B cell (primary cell): ENCODE measurements at regions of chr19 and their contacts with region 1.

Region 1: DNA sequence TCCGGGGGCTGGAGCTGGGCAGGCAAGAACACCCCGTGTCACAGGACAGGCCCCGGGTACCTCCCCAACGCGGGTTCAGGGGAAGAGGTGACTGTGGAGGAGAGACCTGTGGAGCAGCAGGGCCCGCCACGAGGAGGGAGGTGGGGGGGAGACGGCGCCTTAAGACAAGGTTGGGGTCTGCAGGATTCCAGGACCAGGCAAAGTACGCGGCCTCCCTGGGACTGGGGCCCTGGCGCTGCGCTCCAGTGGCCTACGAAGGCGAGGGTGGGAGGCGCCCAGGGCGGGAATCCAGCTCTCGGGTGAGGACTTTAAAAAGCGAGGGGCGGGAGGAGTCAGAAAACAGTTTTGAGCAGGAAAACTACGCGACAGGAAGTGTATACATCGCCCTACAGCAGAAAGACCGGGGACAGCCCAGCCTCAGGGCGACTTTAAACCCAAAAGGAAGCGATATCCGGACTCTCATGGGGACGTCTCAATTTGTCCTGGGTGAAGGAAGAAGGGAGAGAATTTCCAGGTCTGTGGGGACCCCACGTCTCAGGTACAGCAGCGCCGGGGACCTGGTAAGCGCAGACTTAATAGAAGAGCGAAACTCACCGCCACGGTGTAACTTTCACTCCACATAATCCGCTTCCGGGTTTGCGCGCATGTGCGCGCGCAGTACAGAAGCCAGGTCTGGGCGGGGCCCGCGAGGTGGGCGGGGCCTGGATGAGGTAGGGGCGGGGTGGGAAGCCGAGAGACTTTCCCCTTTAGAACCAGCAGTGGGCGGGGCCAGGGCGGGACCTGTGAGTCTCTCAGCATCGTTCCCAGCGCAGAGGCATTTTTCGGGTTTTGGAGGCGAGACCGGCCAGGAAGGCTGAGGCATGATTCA is at the start of gene ZNF83:
- DNase-seq: peak; percentile 97
- ATAC-seq: peak; percentile 96
- H3K4me3 ChIP-seq: peak within 1 kb of the TSS; percentile 72 to 95 (median 89)
- H3K4me3 Mint-ChIP-seq: peak within 1 kb of the TSS; percentile 94
- H3K27ac ChIP-seq: peak within 1 kb of the TSS; percentile 81 to 91
- H3K27ac Mint-ChIP-seq: peak within 1 kb of the TSS; percentile 95
- H3K4me1 ChIP-seq: peaks cover 9 to 18% of the 10 kb centered on the region in 2 donors
- H3K4me1 Mint-ChIP-seq: peaks cover 17% of the 10 kb centered on the region
- H3K27me3 ChIP-seq: no peaks in the 10 kb centered on the region
- H3K27me3 Mint-ChIP-seq: no peaks in the 10 kb centered on the region
- CTCF ChIP-seq: no peak
- total RNA-seq, gene ZNF83: 92.3 and 93.3 TPM in 2 replicates

Region 2: GRCh38 chr19:51904331-51905165 is 733.4 kb before region 1 on chr19 and contains the start of gene ZNF649:
- CTCF ChIA-PET with region 1: no interaction called
- POLR2A ChIA-PET with region 1: no interaction called
- intact Hi-C with region 1: loop called (anchors 2 kb)
- DNase-seq: peak; percentile 90
- ATAC-seq: peak; percentile 95
- H3K4me3 ChIP-seq: peak within 1 kb of the TSS; percentile 66 to 97 (median 91)
- H3K4me3 Mint-ChIP-seq: peak within 1 kb of the TSS; percentile 99
- H3K27ac ChIP-seq: peak within 1 kb of the TSS; percentile 81 to 83
- H3K27ac Mint-ChIP-seq: peak within 1 kb of the TSS; percentile 98
- H3K4me1 ChIP-seq: peaks cover 6 to 15% of the 10 kb centered on the region in 2 donors
- H3K4me1 Mint-ChIP-seq: peaks cover 21% of the 10 kb centered on the region
- H3K27me3 ChIP-seq: peaks cover 0 to 19% (median 3%) of the 10 kb centered on the region in 4 experiments
- H3K27me3 Mint-ChIP-seq: peaks cover 24% of the 10 kb centered on the region
- CTCF ChIP-seq: no peak
- total RNA-seq, gene ZNF649: 35.7 and 36.3 TPM in 2 replicates

Region 3: GRCh38 chr19:52296773-52297600 is 341.0 kb before region 1 on chr19 and contains the start of gene ZNF480:
- CTCF ChIA-PET with region 1: no interaction called
- POLR2A ChIA-PET with region 1: no interaction called
- intact Hi-C with region 1: loop called (anchors 2 kb)
- DNase-seq: peak; percentile 91
- ATAC-seq: peak; percentile 77
- H3K4me3 ChIP-seq: peak within 1 kb of the TSS; percentile 93 to 98 (median 98)
- H3K4me3 Mint-ChIP-seq: peak within 1 kb of the TSS; percentile 96
- H3K27ac ChIP-seq: peak within 1 kb of the TSS; percentile 94 to 96
- H3K27ac Mint-ChIP-seq: peak within 1 kb of the TSS; percentile 98
- H3K4me1 ChIP-seq: peaks cover 11 to 16% of the 10 kb centered on the region in 2 donors
- H3K4me1 Mint-ChIP-seq: peaks cover 21% of the 10 kb centered on the region
- H3K27me3 ChIP-seq: no peaks in the 10 kb centered on the region
- H3K27me3 Mint-ChIP-seq: no peaks in the 10 kb centered on the region
- CTCF ChIP-seq: no peak
- total RNA-seq, gene ZNF480: 21.8 and 24.8 TPM in 2 replicates

Region 4: GRCh38 chr19:52535771-52536447 is 102.0 kb before region 1 on chr19:
- CTCF ChIA-PET with region 1: no interaction called
- POLR2A ChIA-PET with region 1: no interaction called
- intact Hi-C with region 1: loop called (anchors 1 kb)
- DNase-seq: peak; percentile 90
- ATAC-seq: peak; percentile 99
- H3K4me3 ChIP-seq: peak overlapping the region; percentile 71 to 86 (median 76)
- H3K4me3 Mint-ChIP-seq: peak overlapping the region; percentile 95
- H3K27ac ChIP-seq: peak overlapping the region; percentile 45 to 77
- H3K27ac Mint-ChIP-seq: peak overlapping the region; percentile 90
- H3K4me1 ChIP-seq: peaks cover 2 to 18% of the 10 kb centered on the region in 2 donors
- H3K4me1 Mint-ChIP-seq: peaks cover 31% of the 10 kb centered on the region
- H3K27me3 ChIP-seq: no peaks in the 10 kb centered on the region
- H3K27me3 Mint-ChIP-seq: no peaks in the 10 kb centered on the region
- CTCF ChIP-seq: peak; percentile 29

Region 5: DNA sequence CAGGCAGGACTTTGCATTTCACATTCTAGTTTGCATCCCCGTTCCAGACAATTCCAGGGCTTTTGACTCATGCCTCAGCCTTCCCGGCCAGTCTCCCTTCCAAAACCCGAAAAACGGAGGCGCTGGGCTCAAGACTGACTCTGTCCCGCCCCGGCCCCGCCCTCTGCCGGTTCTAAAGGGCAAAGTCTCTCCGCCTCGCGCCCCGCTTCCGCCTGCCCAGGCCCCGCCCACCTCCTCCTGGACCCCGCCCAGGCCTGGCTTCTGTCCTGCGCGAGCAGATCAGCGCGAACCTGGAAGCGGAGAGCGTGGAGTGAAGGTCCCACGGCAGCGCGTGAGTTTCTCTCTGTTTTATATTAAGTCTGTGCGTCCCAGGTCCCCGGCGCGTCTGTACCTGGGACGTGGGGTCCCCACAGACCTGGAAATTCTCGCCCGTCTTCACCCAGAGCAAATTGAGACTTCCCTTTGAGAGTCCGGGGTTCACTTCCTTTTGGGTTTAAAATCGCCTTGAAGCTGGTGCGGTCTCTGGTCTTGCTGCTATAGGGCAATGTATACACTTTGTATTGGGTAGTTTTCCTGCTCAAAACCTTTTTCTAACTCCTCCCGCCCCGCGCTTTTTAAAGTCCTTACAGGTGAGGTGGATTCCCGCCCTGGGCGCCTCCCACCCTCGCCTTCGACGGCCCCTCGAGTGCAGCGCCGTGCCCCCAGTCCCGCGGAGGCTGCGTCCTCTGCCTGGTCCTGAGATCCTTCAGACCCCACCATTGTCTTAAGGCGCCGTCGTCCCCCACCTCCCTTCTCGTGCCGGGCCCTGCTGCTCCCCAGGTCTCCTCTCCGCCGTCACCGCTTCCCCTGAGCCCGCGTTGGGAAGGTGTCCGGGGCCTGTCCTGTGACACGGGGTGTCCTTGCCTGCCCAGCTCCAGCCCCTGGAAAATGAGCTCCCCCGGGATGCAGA is 36.7 kb before region 1 on chr19:
- CTCF ChIA-PET with region 1: no interaction called
- POLR2A ChIA-PET with region 1: no interaction called
- intact Hi-C with region 1: loop called (anchors 1 kb)
- DNase-seq: peak; percentile 92
- ATAC-seq: peak; percentile 99
- H3K4me3 ChIP-seq: peak overlapping the region; percentile 59 to 89 (median 82)
- H3K4me3 Mint-ChIP-seq: peak overlapping the region; percentile 90
- H3K27ac ChIP-seq: peak overlapping the region; percentile 43 to 62
- H3K27ac Mint-ChIP-seq: peak overlapping the region; percentile 87
- H3K4me1 ChIP-seq: peaks cover 11 to 16% of the 10 kb centered on the region in 2 donors
- H3K4me1 Mint-ChIP-seq: peaks cover 25% of the 10 kb centered on the region
- H3K27me3 ChIP-seq: no peaks in the 10 kb centered on the region
- H3K27me3 Mint-ChIP-seq: no peaks in the 10 kb centered on the region
- CTCF ChIP-seq: peak; percentile 61

Region 6: GRCh38 chr19:52734893-52735661 is 97.1 kb after region 1 on chr19 and contains the start of gene ZNF611:
- CTCF ChIA-PET with region 1: no interaction called
- POLR2A ChIA-PET with region 1: no interaction called
- intact Hi-C with region 1: loop called (anchors 1 kb)
- DNase-seq: peak; percentile 98
- ATAC-seq: peak; percentile 98
- H3K4me3 ChIP-seq: peak within 1 kb of the TSS; percentile 67 to 96 (median 90)
- H3K4me3 Mint-ChIP-seq: peak within 1 kb of the TSS; percentile 93
- H3K27ac ChIP-seq: peak within 1 kb of the TSS; percentile 74 to 91
- H3K27ac Mint-ChIP-seq: peak within 1 kb of the TSS; percentile 92
- H3K4me1 ChIP-seq: peaks cover 10 to 19% of the 10 kb centered on the region in 2 donors
- H3K4me1 Mint-ChIP-seq: peaks cover 23% of the 10 kb centered on the region
- H3K27me3 ChIP-seq: no peaks in the 10 kb centered on the region
- H3K27me3 Mint-ChIP-seq: no peaks in the 10 kb centered on the region
- CTCF ChIP-seq: peak; percentile 79
- total RNA-seq, gene ZNF611: 51.5 and 57.9 TPM in 2 replicates

Region 7: DNA sequence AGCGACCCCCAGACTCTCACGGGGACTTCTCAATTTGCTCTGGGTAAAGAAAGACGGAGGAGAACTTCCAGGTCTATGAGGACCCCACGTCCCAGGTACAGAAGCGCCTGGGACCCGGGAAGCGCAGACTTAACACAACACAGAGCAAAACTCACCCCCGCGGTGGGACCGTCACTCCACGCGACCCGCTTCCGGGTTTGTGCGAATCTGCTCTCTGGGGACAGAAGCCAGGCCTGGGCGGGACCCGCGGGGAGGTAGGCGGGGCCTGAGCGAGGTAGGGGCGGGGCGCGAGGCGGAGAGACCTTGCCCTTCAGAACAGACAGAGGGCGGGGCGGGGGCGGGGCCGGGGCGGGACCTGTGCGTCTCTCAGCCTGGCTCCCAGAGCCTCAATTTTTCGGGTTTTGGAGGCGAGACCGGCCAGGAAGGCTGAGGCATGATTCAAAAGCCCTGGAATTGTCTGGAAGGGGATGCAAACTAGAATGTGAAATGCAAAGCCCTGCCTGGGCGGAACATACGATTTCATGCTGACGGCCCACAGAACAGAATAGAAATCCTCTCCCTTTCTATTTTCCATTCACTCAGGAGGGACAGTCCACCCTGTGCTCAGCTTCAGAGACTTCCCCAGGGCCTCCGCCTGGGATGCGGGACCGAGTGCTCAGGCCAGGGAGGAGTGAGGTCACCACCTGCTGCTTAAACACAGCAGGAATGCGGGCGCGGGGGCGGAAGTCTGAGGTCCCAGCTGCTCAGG is 304.6 kb after region 1 on chr19:
- CTCF ChIA-PET with region 1: no interaction called
- POLR2A ChIA-PET with region 1: no interaction called
- intact Hi-C with region 1: loop called (anchors 1 kb)
- DNase-seq: peak; percentile 96
- ATAC-seq: peak; percentile 100
- H3K4me3 ChIP-seq: peak overlapping the region; percentile 64 to 97 (median 88)
- H3K4me3 Mint-ChIP-seq: peak overlapping the region; percentile 92
- H3K27ac ChIP-seq: peak overlapping the region; percentile 72 to 90
- H3K27ac Mint-ChIP-seq: peak overlapping the region; percentile 86
- H3K4me1 ChIP-seq: peaks cover 6 to 20% of the 10 kb centered on the region in 2 donors
- H3K4me1 Mint-ChIP-seq: peaks cover 30% of the 10 kb centered on the region
- H3K27me3 ChIP-seq: no peaks in the 10 kb centered on the region
- H3K27me3 Mint-ChIP-seq: no peaks in the 10 kb centered on the region
- CTCF ChIP-seq: no peak